PC-9 (cell line): ENCODE measurements at regions of chr11 and their contacts with region 1.

Region 1: DNA sequence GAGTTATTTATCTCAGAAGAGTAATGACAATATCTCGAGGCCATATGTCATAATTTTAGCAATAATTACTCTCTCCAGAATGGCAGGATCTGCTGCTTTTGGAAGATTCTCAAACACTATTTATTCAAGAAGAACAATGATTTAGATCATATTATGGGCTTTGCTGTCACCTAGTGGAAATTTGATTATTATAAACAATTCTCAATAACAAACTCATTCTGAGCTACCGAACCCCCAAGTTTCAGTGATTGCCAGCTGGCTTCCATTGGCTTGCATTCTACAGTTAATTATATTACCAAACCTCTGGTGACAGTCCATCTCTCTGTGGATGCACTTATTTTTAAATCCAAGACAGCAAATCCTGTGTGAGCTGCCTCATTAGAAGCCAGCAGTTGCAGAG is 27.9 kb upstream of the SLC36A4 start:
- DNase-seq: no peak
- H3K4me3 ChIP-seq: no peak overlapping the region
- H3K27ac ChIP-seq: no peak overlapping the region
- H3K4me1 ChIP-seq: no peaks in the 10 kb centered on the region
- H3K27me3 ChIP-seq: no peaks in the 10 kb centered on the region
- CTCF ChIP-seq: peak; percentile 71

Region 2: DNA sequence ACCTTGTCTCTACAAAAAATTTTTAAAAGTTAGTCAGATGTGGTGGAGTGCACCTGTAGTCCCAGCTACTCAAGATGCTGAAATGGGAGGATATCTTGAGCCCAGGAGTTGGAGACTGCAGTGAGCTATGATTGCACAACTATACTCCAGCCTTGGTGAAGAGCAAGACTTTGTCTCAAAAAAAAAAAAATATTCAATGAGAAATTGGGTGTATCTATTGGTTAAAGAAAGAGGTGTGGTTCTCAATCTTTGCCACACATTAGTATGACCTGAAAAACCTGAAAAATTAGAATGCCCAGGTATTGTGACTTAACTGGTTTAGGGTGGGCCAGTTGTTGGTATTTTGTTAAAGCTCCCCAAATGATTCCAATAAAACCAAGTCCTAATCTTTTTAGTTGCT is 223.8 kb before region 1 on chr11:
- CTCF ChIA-PET with region 1: no interaction called
- POLR2A ChIA-PET with region 1: interaction called, 11 read pairs
- intact Hi-C with region 1: no loop called
- DNase-seq: peak in 1 of 2 experiments; percentile 63
- H3K4me3 ChIP-seq: no peak overlapping the region
- H3K27ac ChIP-seq: peak overlapping the region; percentile 84
- H3K4me1 ChIP-seq: peaks cover 29% of the 10 kb centered on the region
- H3K27me3 ChIP-seq: no peaks in the 10 kb centered on the region
- CTCF ChIP-seq: no peak

Region 3: GRCh38 chr11:93236741-93237675 is 11.3 kb after region 1 on chr11:
- CTCF ChIA-PET with region 1: no interaction called
- POLR2A ChIA-PET with region 1: no interaction called
- intact Hi-C with region 1: no loop called
- DNase-seq: peak in 1 of 2 experiments; percentile 39
- H3K4me3 ChIP-seq: no peak overlapping the region
- H3K27ac ChIP-seq: no peak overlapping the region
- H3K4me1 ChIP-seq: no peaks in the 10 kb centered on the region
- H3K27me3 ChIP-seq: no peaks in the 10 kb centered on the region
- CTCF ChIP-seq: peak; percentile 64; the same call in 1 of the 2 replicates

Region 4: DNA sequence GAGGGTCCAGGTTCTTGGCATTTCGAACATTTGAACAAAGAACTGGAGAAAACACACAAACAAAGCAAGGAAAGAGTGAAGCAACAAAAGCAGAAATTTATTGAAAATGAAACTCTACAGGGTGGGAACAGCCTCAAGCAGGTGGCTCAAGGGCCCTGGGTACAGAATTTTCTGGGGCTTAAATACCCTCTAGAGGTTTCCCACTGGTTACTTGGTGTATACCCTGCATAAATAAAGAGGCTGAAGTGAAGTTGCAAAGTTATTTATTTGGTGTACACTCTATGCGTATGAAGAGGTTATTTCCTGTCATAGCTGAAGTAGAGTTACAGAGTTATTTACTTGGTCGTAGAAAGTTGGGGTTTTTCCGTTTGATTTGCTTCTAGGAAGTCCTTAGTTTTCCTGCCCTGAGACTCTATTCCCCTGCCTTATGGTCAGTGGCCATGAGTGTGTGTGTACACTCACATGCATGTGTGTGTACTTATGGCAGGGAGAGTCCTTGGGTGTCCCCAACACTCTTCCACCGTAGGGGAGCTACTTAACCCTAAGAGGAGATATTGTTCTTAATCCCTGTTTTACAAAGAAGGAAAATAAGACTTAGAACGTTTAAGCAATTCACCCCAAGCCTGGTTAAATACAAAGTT is 323.1 kb after region 1 on chr11:
- CTCF ChIA-PET with region 1: no interaction called
- POLR2A ChIA-PET with region 1: no interaction called
- intact Hi-C with region 1: no loop called
- DNase-seq: no peak
- H3K4me3 ChIP-seq: no peak overlapping the region
- H3K27ac ChIP-seq: no peak overlapping the region
- H3K4me1 ChIP-seq: 0 out of 2 replicates have a peak, but pooled peaks cover 3% of the 10 kb centered on the region
- H3K27me3 ChIP-seq: no peaks in the 10 kb centered on the region; the same call in 1 of the 2 replicates
- CTCF ChIP-seq: no peak

Region 5: GRCh38 chr11:93585758-93586157 is 360.1 kb after region 1 on chr11:
- CTCF ChIA-PET with region 1: no interaction called
- POLR2A ChIA-PET with region 1: no interaction called
- intact Hi-C with region 1: no loop called
- DNase-seq: peak; percentile 5 to 51
- H3K4me3 ChIP-seq: no peak overlapping the region
- H3K27ac ChIP-seq: no peak overlapping the region
- H3K4me1 ChIP-seq: no peaks in the 10 kb centered on the region
- H3K27me3 ChIP-seq: no peaks in the 10 kb centered on the region
- CTCF ChIP-seq: no peak

Region 6: GRCh38 chr11:94046796-94047195 is 821.1 kb after region 1 on chr11:
- CTCF ChIA-PET with region 1: no interaction called
- POLR2A ChIA-PET with region 1: no interaction called
- intact Hi-C with region 1: no loop called
- DNase-seq: peak in 1 of 2 experiments; percentile 85
- H3K4me3 ChIP-seq: no peak overlapping the region
- H3K27ac ChIP-seq: peak overlapping the region; percentile 21; the same call in 1 of the 2 replicates
- H3K4me1 ChIP-seq: peaks cover 15% of the 10 kb centered on the region
- H3K27me3 ChIP-seq: no peaks in the 10 kb centered on the region
- CTCF ChIP-seq: no peak